SK-N-SH (cell line): ENCODE measurements at regions of chr22 and their contacts with region 1.

Region 1: GRCh38 chr22:24423519-24424000 is 3.8 kb upstream of the ADORA2A start:
- DNase-seq: peak; percentile 96
- H3K4me3 ChIP-seq: peak overlapping the region; percentile 58 to 72
- H3K27ac ChIP-seq: peak overlapping the region in 1 of 2 experiments; percentile 89; a peak in 1 of 4 replicates
- H3K4me1 ChIP-seq: peaks cover 0 to 76% of the 10 kb centered on the region in 2 experiments; a peak in 1 of 4 replicates
- H3K27me3 ChIP-seq: no peaks in the 10 kb centered on the region
- CTCF ChIP-seq: peak; percentile 70
- EP300 ChIP-seq: no peak
- RAD21 ChIP-seq: peak; percentile 67

Region 2: DNA sequence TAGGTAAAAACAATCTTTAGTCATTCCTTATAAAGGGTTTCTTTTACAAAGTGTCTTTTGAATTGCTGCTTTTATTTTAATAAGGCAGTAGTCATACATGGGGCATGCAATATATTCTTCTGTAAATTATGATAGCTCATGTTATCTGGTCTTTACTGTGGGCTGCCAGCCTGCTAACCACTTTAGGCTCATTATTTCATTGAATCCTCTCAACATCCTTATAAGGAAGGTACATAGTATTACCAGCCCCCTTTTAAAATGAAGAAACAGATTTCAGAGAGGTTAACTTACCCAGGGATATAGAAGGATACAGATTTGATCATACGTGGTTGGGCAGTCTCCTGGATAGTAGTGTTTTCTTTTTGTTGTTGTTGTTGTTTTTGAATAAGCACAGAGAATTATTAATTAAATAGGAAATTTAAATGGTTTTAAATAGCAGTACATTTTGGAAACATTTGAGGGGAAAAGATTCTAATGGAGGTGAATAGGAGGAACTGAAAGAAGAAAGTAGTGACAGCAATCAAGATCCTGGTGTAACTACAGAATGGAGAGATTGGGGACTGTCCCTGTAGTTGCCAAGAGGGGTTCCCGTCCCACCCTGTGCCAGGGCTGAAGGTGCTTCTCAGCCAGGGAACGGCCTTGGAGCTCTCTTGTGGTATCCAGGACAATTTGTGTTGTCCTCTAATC is 131.9 kb before region 1 on chr22:
- CTCF ChIA-PET with region 1: no interaction called
- POLR2A ChIA-PET with region 1: no interaction called
- DNase-seq: no peak
- H3K4me3 ChIP-seq: no peak overlapping the region
- H3K27ac ChIP-seq: peak overlapping the region; percentile 87 to 91
- H3K4me1 ChIP-seq: peaks cover 32 to 35% of the 10 kb centered on the region in 2 experiments
- H3K27me3 ChIP-seq: no peaks in the 10 kb centered on the region
- CTCF ChIP-seq: no peak
- EP300 ChIP-seq: no peak
- RAD21 ChIP-seq: no peak

Region 3: GRCh38 chr22:24402460-24403192 is 20.9 kb before region 1 on chr22:
- CTCF ChIA-PET with region 1: interaction called, 42 read pairs
- POLR2A ChIA-PET with region 1: interaction called, 12 read pairs
- DNase-seq: peak; percentile 75
- H3K4me3 ChIP-seq: peak overlapping the region in 1 of 2 experiments; percentile 9; a peak in 1 of 4 replicates
- H3K27ac ChIP-seq: peak overlapping the region; percentile 78 to 100
- H3K4me1 ChIP-seq: peaks cover 30 to 82% of the 10 kb centered on the region in 2 experiments
- H3K27me3 ChIP-seq: no peaks in the 10 kb centered on the region
- CTCF ChIP-seq: no peak
- EP300 ChIP-seq: peak; percentile 75 to 91; a peak in 3 of 4 replicates
- RAD21 ChIP-seq: peak; percentile 44

Region 4: DNA sequence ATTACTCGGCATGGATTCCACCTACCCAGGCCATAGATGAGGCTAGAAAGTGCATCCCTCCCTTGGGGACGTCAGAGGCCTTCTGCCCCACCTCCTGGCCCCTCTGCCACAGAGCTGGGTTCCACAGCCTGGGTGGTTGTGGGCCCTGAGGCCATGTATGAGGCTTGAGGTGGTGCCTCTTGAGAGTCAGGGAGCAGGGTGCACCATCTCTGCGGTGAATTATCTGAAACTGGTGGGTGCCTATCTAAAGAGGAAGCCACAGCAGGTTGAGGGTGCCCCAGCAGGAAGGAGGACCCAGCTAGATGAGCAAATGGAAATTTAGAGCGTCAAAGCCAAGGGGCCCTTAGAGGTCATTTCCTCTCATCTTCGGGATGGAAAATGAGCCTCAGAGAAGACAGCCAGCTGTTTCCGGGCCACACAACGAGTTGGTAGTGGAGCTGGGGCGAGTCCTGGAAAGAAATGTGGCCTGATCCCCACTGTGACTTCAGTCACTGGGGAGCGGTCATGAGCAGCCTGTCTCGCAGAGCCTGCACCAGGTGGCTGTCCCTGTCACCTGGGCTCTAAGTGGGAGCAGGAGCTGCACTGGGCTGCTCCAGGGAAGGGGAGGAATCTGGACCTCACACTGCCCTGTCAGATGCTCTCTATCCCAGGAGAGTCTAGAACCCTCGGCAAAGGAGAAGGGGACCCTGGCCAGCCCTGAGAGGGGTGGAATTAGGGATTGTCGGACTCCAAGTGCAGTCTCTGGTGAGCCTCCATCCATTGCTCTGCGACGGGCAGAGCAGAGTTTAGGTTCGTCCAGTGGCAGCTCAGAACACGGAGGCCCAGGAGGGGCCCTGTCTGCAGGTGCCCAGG is 11.1 kb after region 1 on chr22:
- CTCF ChIA-PET with region 1: interaction called, 29 read pairs
- POLR2A ChIA-PET with region 1: interaction called, 6 read pairs
- DNase-seq: peak; percentile 17
- H3K4me3 ChIP-seq: no peak overlapping the region
- H3K27ac ChIP-seq: peak overlapping the region in 1 of 2 experiments; percentile 50; a peak in 1 of 4 replicates
- H3K4me1 ChIP-seq: peaks cover 15 to 94% of the 10 kb centered on the region in 2 experiments; a peak in 3 of 4 replicates
- H3K27me3 ChIP-seq: no peaks in the 10 kb centered on the region
- CTCF ChIP-seq: no peak
- EP300 ChIP-seq: no peak
- RAD21 ChIP-seq: no peak

Region 5: GRCh38 chr22:24486501-24486921 is 63.0 kb after region 1 on chr22:
- CTCF ChIA-PET with region 1: interaction called, 11 read pairs
- POLR2A ChIA-PET with region 1: no interaction called
- DNase-seq: no peak
- H3K4me3 ChIP-seq: no peak overlapping the region
- H3K27ac ChIP-seq: peak overlapping the region; percentile 41 to 84; a peak in 3 of 4 replicates
- H3K4me1 ChIP-seq: peaks cover 0 to 35% of the 10 kb centered on the region in 2 experiments; a peak in 3 of 4 replicates
- H3K27me3 ChIP-seq: no peaks in the 10 kb centered on the region
- CTCF ChIP-seq: no peak
- EP300 ChIP-seq: peak in 1 of 2 experiments; percentile 91; a peak in 3 of 4 replicates
- RAD21 ChIP-seq: no peak